ENCODE measurements at regions of chr3 and their contacts with region 1.

Region 1: DNA sequence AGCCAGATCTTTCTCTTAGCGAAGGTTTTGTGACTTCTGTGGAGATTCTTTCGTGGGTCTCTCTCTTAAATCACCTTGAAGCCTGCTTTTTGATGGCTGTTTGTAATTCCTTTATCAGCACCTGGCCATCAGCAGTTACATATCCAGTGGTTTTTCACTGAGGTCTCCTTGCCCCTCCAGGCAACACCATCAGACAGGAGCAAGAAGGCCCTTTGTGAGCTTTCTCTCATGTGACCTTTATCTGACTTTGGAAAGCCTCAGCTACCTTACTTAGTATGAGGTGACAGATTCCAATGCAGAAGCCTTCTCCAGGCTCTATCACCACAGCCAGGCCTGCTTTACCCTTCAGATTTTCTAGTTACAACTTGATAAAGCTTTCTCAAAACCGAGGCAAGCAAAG is 30.0 kb upstream of the P3H2 start:
- DNase-seq: no peak
- ATAC-seq: no peak
- H3K4me3 ChIP-seq: no peak overlapping the region
- H3K27ac ChIP-seq: no peak overlapping the region
- H3K4me1 ChIP-seq: peaks cover 2% of the 10 kb centered on the region; the same call in 1 of the 2 replicates
- H3K27me3 ChIP-seq: peaks cover 8% of the 10 kb centered on the region; the same call in 1 of the 2 replicates
- CTCF ChIP-seq: no peak
- POLR2A ChIP-seq: no peak
- RAD21 ChIP-seq: no peak

Region 2: GRCh38 chr3:189714991-189715961 is 435.4 kb before region 1 on chr3:
- CTCF ChIA-PET with region 1: no interaction called
- POLR2A ChIA-PET with region 1: no interaction called
- dilution Hi-C with region 1: no loop called
- in situ Hi-C with region 1: no loop called
- intact Hi-C with region 1: no loop called
- DNase-seq: peak; percentile 74
- ATAC-seq: peak; percentile 50
- H3K4me3 ChIP-seq: no peak overlapping the region
- H3K27ac ChIP-seq: 0 out of 2 replicates have a peak overlapping the region, but pooled peaks have one; percentile 37
- H3K4me1 ChIP-seq: peaks cover 9% of the 10 kb centered on the region
- H3K27me3 ChIP-seq: no peaks in the 10 kb centered on the region
- CTCF ChIP-seq: no peak
- POLR2A ChIP-seq: no peak
- RAD21 ChIP-seq: no peak

Region 3: GRCh38 chr3:190036631-190037030 is 114.0 kb before region 1 on chr3:
- CTCF ChIA-PET with region 1: no interaction called
- POLR2A ChIA-PET with region 1: no interaction called
- dilution Hi-C with region 1: no loop called
- in situ Hi-C with region 1: no loop called
- intact Hi-C with region 1: no loop called
- DNase-seq: peak; percentile 80
- ATAC-seq: 0 out of 2 replicates have a peak, but pooled peaks have one; percentile 39
- H3K4me3 ChIP-seq: no peak overlapping the region
- H3K27ac ChIP-seq: no peak overlapping the region
- H3K4me1 ChIP-seq: peaks cover 5% of the 10 kb centered on the region; the same call in 1 of the 2 replicates
- H3K27me3 ChIP-seq: no peaks in the 10 kb centered on the region
- CTCF ChIP-seq: no peak
- POLR2A ChIP-seq: no peak
- RAD21 ChIP-seq: no peak

Region 4: DNA sequence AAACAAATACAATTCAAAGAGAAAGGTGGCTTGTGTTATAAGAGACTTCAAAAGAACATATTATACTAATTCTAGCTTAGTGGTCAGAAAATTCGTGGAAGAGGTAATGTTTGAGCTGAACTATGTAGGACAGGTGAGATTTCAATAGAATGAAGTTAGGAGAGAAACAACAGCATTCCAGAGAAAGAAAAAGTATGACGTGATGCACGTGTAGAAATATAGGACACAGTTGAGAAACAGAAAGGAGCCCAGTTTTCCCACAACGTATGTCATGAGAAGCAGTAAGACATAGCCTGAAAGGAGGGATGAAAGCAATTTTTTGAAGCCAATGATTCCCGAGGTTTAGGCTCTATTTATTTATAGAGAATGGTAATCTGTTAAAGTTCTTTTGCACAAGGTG is 11.3 kb before region 1 on chr3:
- CTCF ChIA-PET with region 1: interaction called, 3 read pairs
- POLR2A ChIA-PET with region 1: no interaction called
- dilution Hi-C with region 1: no loop called
- in situ Hi-C with region 1: no loop called
- intact Hi-C with region 1: loop called (anchors 1 kb)
- DNase-seq: no peak
- ATAC-seq: no peak
- H3K4me3 ChIP-seq: no peak overlapping the region
- H3K27ac ChIP-seq: no peak overlapping the region
- H3K4me1 ChIP-seq: no peaks in the 10 kb centered on the region
- H3K27me3 ChIP-seq: no peaks in the 10 kb centered on the region
- CTCF ChIP-seq: no peak
- POLR2A ChIP-seq: no peak
- RAD21 ChIP-seq: no peak

Measured in IMR-90 (cell line).